Sigmoid colon (tissue), 7 donors: ENCODE measurements at regions of chr1 and their contacts with region 1.

Region 1: DNA sequence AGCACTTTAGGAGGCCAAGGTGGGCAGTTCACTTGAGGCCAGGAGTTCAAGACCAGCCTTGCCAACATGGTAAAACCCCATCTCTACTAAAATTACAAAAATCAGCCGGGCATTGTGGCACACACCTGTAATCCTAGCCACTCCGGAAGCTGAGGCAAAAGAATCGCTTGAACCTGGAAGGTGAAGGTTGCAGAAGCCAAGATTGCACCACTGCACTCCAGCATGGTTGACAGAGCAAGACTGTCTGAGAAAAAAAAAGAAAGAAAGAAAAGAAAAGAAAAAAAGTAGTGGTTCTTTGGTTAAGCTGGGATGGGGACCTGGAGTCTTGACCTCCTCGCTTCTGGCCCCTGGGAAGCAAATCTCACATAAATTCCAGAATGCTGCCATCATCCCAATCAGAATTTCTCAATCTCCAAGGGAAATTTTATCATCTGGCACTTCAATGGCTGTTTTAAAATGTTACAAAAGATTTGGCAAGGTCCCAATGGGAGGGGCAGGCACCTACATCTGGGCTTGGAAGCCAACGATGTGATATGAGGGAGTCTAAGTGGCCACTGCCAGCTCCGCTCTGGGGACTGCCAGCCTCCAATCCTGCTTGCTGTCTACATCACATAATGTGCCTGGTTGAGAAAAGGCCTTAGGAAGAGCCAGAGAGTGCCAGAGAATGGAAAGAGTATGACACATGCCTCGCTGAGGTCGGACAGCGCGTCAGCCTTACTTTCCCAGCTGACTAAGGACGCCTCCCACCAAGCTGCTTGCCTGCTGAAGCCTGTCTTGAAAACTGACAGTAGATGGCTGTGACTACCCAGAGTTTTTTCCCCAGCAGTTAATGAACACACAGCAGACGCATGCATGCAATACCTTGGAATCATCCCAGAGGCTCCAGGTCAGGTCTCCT is 42.1 kb upstream of the SRP9 start:
- DNase-seq: peak; percentile 84
- H3K4me3 ChIP-seq: no peak overlapping the region
- H3K27ac ChIP-seq: peak overlapping the region; percentile 39 to 55 (median 48)
- H3K4me1 ChIP-seq: peaks cover 0 to 16% (median 14%) of the 10 kb centered on the region in 4 donors
- H3K27me3 ChIP-seq: no peaks in the 10 kb centered on the region
- CTCF ChIP-seq: no peak
- EP300 ChIP-seq: no peak
- POLR2A ChIP-seq: no peak

Region 2: GRCh38 chr1:225670806-225671733 is 64.4 kb before region 1 on chr1:
- intact Hi-C with region 1: loop called (anchors 5 kb)
- DNase-seq: no peak
- H3K4me3 ChIP-seq: no peak overlapping the region
- H3K27ac ChIP-seq: no peak overlapping the region
- H3K4me1 ChIP-seq: peaks cover 0 to 12% (median 8%) of the 10 kb centered on the region in 4 donors
- H3K27me3 ChIP-seq: no peaks in the 10 kb centered on the region
- CTCF ChIP-seq: no peak
- EP300 ChIP-seq: no peak
- POLR2A ChIP-seq: no peak

Region 3: GRCh38 chr1:225694151-225694603 is 41.3 kb before region 1 on chr1:
- intact Hi-C with region 1: loop called (anchors 5 kb)
- DNase-seq: no peak
- H3K4me3 ChIP-seq: no peak overlapping the region
- H3K27ac ChIP-seq: no peak overlapping the region
- H3K4me1 ChIP-seq: peaks cover 0 to 8% (median 3%) of the 10 kb centered on the region in 4 donors
- H3K27me3 ChIP-seq: no peaks in the 10 kb centered on the region
- CTCF ChIP-seq: no peak
- EP300 ChIP-seq: no peak
- POLR2A ChIP-seq: no peak